Prostate gland (tissue), 2 donors: ENCODE measurements at regions of chr12 and their contacts with region 1.

Region 1: GRCh38 chr12:2057041-2057794 is 4.4 kb downstream of the CACNA1C start:
- DNase-seq: peak; percentile 48
- H3K4me3 ChIP-seq: no peak overlapping the region
- H3K27ac ChIP-seq: peak overlapping the region in 1 of 2 donors; percentile 42
- H3K4me1 ChIP-seq: peaks cover 4% of the 10 kb centered on the region
- H3K27me3 ChIP-seq: no peaks in the 10 kb centered on the region
- CTCF ChIP-seq: peak; percentile 41 to 71 (median 62)
- POLR2A ChIP-seq: no peak

Region 2: DNA sequence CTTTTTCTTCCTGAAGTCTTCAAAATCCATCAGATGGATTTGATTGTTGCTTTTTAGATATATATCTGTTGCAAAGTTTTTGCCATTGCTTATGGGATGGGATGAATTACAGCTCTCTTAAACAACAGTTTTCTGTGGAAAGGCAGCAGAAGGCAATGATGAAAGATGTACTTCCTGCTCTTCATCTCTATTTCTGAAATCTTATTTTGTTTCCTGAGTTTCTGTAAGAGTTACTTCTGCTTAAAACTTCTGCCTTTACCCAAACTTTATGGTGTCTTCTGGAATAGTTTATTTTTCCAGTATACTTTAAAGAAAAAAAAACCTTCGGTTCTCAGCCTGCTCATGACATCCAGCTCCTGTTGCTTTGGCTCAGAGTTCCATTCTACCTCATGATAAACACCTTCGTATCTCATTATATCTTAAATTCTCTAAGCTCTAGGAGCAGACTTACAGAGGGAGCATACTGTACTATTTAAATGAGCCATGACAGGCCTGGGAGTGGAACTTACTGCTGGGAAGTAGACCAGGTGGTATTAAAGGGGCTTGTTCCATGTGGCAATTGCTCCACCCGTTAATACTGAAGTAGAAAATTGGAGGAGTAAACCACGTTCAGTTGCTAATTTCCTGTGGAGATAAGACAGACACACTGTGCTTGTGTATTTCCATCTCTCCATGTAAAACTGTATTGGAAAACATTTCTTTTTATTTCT is 751.3 kb before region 1 on chr12:
- intact Hi-C with region 1: no loop called
- DNase-seq: no peak
- H3K4me3 ChIP-seq: no peak overlapping the region
- H3K27ac ChIP-seq: no peak overlapping the region
- H3K4me1 ChIP-seq: no peaks in the 10 kb centered on the region
- H3K27me3 ChIP-seq: no peaks in the 10 kb centered on the region
- CTCF ChIP-seq: no peak
- POLR2A ChIP-seq: no peak

Region 3: DNA sequence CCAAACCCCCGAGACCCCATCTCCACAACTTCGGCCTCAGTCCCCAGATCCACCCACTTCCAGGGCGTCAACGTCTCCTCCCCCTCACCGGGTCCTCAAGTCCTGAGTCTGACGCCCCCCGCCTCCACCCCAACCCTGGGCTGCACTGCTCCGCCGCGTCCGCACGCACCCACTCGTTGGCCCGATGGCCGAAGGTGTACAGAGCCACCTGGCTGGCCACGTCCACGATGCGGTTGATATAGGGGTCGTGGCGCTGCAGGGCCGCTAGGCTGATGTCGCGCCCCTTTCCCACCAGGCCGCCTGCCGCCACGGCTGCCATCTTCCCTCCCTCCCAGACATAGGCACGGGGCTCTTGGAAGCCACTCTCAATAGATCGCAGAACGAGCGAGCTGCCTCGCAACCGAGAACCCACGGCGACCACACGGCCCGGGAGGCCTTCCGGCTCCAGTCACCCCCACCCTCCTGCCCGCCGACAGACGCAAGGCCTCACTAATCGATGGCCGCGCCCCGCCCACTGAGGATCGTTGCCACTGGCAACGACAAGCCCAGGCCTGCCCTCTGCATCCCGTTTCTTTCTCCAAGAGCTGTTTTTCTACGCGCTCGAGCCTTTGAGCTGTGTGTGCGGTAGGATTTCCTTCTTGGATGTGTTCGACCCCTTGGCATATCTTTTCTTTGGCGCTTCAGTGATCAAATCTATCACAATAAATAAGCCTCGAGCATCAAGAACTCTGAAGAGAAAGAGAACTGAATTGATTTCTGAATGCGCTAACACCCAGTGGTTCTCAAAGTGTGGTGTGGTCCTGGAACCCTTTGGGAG is 52.9 kb before region 1 on chr12 and contains the start of gene DCP1B:
- intact Hi-C with region 1: loop called (anchors 2 kb)
- DNase-seq: peak; percentile 94
- H3K4me3 ChIP-seq: peak within 1 kb of the TSS; percentile 71 to 92
- H3K27ac ChIP-seq: peak within 1 kb of the TSS; percentile 89 to 92
- H3K4me1 ChIP-seq: no peaks in the 10 kb centered on the region
- H3K27me3 ChIP-seq: no peaks in the 10 kb centered on the region
- CTCF ChIP-seq: peak in 1 of 4 experiments; percentile 40
- POLR2A ChIP-seq: peak; percentile 63
- total RNA-seq, gene DCP1B: 20.1 to 31.9 TPM

Region 4: DNA sequence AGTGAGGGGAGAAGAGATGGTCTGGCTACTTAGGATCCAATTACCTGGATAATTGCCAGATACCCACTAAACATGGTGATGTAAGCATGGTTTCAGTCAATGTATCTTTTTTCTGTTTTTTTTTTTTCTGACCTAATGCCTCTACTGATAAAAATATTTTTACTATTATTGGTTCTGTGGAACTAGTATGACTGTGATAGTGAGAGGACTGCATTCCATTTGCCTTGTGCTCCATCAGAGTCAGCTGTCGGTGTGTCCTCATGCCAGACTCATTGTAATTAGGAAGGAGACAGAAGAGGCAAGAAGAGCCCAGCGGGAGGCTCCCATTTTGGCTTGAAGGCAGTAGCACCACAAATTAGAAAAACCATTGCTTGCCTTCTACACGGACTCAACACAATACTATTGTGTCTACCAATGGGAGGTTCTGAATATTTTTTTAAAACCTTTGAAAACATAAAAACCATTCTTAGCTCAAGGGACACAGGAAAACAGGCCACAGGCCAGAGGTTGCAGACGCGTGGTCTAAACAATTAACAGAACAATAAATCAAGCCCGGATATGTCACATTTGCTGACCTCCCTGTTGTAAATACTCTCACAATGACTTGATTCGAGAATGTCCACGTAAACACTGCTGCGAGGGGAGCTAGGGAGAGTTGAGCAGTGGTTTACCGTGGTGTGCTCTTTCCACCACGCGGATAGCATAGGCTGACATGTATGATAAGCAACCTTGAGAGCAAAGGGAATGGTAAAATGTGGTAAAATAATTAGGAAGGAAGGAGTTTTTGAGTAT is 39.5 kb before region 1 on chr12:
- intact Hi-C with region 1: no loop called
- DNase-seq: no peak
- H3K4me3 ChIP-seq: no peak overlapping the region
- H3K27ac ChIP-seq: no peak overlapping the region
- H3K4me1 ChIP-seq: no peaks in the 10 kb centered on the region
- H3K27me3 ChIP-seq: no peaks in the 10 kb centered on the region
- CTCF ChIP-seq: no peak
- POLR2A ChIP-seq: no peak

Region 5: DNA sequence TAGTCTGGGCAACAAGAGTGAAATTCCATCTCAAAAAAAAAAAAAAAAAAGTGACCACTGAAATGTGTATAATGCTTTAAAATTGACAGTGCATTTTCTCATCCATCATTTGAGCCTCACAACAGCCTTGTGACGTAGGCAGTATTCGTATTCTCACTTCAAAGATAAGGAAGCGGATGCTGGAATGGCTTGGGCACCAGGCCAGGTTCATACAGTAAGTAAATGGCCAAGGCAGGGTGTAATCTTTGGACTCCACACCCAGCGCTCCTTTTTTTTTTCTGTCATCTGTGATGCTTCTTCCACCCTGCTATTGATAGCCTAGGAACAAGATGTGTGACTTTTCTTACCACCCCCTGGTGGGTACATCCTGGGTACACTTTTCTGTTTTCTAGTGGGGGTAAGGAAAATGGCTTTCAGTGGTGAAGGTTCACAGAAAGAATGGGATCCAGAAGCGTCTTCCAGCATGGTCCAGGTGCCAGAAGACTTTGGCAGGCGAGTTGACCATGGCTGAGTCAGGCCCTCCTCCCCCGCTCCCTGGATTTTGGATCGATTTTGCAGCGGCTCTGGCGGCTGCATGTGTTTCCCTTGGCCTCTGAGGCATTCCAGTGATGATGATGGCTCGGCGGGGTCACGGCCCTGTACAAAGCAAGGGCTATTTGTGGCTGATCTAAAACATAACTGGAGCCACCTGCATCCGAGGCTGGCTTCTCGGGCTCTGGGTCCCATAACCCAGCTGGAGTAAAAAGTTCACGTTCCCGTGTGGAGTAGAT is 106.1 kb after region 1 on chr12:
- intact Hi-C with region 1: loop called (anchors 5 kb)
- DNase-seq: no peak
- H3K4me3 ChIP-seq: no peak overlapping the region
- H3K27ac ChIP-seq: peak overlapping the region in 1 of 2 donors; percentile 40
- H3K4me1 ChIP-seq: peaks cover 13% of the 10 kb centered on the region
- H3K27me3 ChIP-seq: no peaks in the 10 kb centered on the region
- CTCF ChIP-seq: no peak
- POLR2A ChIP-seq: no peak

Region 6: GRCh38 chr12:2273288-2273687 is 216.1 kb after region 1 on chr12:
- intact Hi-C with region 1: loop called (anchors 5 kb)
- DNase-seq: no peak
- H3K4me3 ChIP-seq: no peak overlapping the region
- H3K27ac ChIP-seq: no peak overlapping the region
- H3K4me1 ChIP-seq: no peaks in the 10 kb centered on the region
- H3K27me3 ChIP-seq: no peaks in the 10 kb centered on the region
- CTCF ChIP-seq: peak in 1 of 4 experiments; percentile 33
- POLR2A ChIP-seq: no peak

Region 7: GRCh38 chr12:2284857-2285256 is 227.6 kb after region 1 on chr12:
- intact Hi-C with region 1: loop called (anchors 5 kb)
- DNase-seq: peak; percentile 60
- H3K4me3 ChIP-seq: no peak overlapping the region
- H3K27ac ChIP-seq: peak overlapping the region in 1 of 2 donors; percentile 1
- H3K4me1 ChIP-seq: peaks cover 10% of the 10 kb centered on the region
- H3K27me3 ChIP-seq: no peaks in the 10 kb centered on the region
- CTCF ChIP-seq: peak in 3 of 4 experiments; percentile 40 to 70 (median 62)
- POLR2A ChIP-seq: no peak

Region 8: GRCh38 chr12:2387103-2387834 is 330.1 kb after region 1 on chr12:
- intact Hi-C with region 1: loop called (anchors 10 kb)
- DNase-seq: no peak
- H3K4me3 ChIP-seq: no peak overlapping the region
- H3K27ac ChIP-seq: no peak overlapping the region
- H3K4me1 ChIP-seq: no peaks in the 10 kb centered on the region
- H3K27me3 ChIP-seq: no peaks in the 10 kb centered on the region
- CTCF ChIP-seq: no peak
- POLR2A ChIP-seq: no peak

Region 9: DNA sequence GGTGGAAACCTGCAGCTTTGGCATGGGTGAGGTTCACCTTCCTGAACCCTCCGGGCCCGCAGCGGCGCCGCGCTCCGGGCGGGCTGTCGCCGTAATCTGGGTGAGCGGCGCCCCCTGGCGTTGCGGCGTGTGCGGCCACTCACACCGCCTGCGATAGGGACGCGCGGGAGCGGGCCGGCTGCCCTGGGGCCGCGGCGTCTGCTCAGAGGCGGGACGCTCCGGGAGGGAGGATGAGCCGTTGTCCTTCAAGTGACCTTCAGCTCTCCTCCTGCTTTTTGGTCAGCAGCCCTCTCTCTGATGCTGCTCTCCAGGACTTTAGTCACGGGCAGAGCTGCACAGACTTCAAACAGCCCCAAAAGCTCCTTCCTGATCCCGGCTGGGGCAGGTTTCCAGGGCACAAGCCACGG is 525.9 kb after region 1 on chr12:
- intact Hi-C with region 1: loop called (anchors 5 kb)
- DNase-seq: peak; percentile 36
- H3K4me3 ChIP-seq: no peak overlapping the region
- H3K27ac ChIP-seq: no peak overlapping the region
- H3K4me1 ChIP-seq: no peaks in the 10 kb centered on the region
- H3K27me3 ChIP-seq: no peaks in the 10 kb centered on the region
- CTCF ChIP-seq: peak; percentile 75 to 96 (median 87)
- POLR2A ChIP-seq: no peak